ENCODE measurements at regions of chr2 and their contacts with region 1.

Region 1: DNA sequence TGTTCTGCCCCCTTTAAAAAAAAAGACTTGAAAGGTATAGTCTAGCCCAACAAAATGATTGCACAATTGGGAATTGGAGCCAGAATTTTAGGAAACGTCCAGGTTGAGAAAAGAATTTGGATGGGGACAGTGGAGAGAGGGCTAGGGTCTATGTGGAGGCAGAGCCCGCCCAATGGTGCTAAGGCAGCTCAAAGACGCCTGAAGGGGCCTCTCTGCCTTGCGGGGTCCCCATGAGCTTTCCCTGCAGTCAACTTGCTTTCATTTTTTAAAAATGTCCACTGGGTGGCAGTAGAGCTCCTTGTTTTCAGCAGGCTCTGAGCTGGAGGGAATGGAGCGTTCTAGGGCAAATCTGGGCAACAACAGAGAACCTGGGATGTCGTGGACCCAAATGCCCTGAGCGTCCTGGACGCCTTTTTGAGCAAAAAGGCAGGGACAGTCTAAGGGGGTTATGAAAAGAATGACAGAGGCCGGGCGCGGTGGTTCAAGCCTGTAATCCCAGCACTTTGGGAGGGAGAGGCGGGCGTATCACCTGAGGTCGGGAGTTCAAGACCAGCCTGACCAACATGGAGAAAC is 40.2 kb upstream of the ITM2C start:
- DNase-seq: no peak
- H3K4me3 ChIP-seq: peak overlapping the region; percentile 1; the same call in 1 of the 2 replicates
- H3K27me3 ChIP-seq: peaks cover 4% of the 10 kb centered on the region; the same call in 1 of the 2 replicates
- CTCF ChIP-seq: peak; percentile 69

Region 2: GRCh38 chr2:230700447-230700846 is 124.0 kb before region 1 on chr2:
- CTCF ChIA-PET with region 1: no interaction called
- POLR2A ChIA-PET with region 1: no interaction called
- DNase-seq: no peak
- H3K4me3 ChIP-seq: no peak overlapping the region
- H3K27me3 ChIP-seq: no peaks in the 10 kb centered on the region
- CTCF ChIP-seq: no peak

Region 3: GRCh38 chr2:230842473-230842872 is 18.0 kb after region 1 on chr2:
- CTCF ChIA-PET with region 1: interaction called, 18 read pairs
- POLR2A ChIA-PET with region 1: no interaction called
- DNase-seq: no peak
- H3K4me3 ChIP-seq: no peak overlapping the region
- H3K27me3 ChIP-seq: peaks cover 4% of the 10 kb centered on the region; the same call in 1 of the 2 replicates
- CTCF ChIP-seq: no peak

Region 4: DNA sequence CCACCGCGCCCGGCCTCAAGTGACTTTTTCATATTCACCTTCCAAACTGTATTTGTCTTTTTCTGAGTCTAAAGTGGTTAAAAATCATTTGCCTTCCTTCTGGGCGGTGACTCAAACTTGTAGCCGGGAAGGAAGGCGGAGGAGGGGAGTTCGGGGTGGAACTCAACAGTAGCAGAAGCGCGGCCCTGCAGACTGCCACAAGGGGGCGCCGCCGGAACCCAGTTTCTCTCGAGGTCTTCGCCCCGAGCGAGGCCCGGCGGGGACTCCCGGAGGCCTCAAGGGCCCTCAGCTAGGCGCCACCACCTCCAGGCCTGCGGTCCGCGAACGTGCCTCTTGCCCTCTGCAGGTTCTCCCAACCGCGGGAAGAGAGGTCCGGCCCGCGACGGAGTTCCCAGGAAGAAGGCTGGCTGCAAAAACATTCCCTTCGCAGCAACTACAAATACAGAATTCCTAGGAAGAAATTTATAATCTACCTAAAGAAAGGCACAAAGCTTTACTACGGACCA is 23.4 kb after region 1 on chr2:
- CTCF ChIA-PET with region 1: interaction called, 18 read pairs
- POLR2A ChIA-PET with region 1: no interaction called
- DNase-seq: no peak
- H3K4me3 ChIP-seq: no peak overlapping the region
- H3K27me3 ChIP-seq: peaks cover 6% of the 10 kb centered on the region
- CTCF ChIP-seq: peak; percentile 98

Region 5: DNA sequence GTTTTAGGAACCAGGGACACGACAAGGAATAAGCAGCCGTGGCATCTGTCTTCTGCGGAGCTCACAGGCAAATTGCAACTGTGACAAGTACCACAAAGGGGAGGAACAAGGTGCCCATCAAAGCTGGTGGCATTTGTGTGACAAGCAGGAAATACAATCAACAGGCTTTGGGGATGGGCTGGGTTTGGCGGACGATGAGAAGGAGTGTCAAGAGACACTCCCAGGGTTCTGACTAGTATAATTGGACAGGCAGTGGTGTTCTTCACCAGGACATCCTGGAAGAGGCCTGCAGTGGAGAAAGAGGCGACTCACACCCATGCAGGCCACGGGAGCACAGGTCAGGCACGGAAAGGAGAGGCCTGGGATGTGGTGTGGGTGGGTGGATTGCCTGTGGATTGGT is 157.2 kb after region 1 on chr2:
- CTCF ChIA-PET with region 1: interaction called, 87 read pairs
- POLR2A ChIA-PET with region 1: no interaction called
- DNase-seq: no peak
- H3K4me3 ChIP-seq: no peak overlapping the region
- H3K27me3 ChIP-seq: peaks cover 1% of the 10 kb centered on the region
- CTCF ChIP-seq: no peak

Region 6: DNA sequence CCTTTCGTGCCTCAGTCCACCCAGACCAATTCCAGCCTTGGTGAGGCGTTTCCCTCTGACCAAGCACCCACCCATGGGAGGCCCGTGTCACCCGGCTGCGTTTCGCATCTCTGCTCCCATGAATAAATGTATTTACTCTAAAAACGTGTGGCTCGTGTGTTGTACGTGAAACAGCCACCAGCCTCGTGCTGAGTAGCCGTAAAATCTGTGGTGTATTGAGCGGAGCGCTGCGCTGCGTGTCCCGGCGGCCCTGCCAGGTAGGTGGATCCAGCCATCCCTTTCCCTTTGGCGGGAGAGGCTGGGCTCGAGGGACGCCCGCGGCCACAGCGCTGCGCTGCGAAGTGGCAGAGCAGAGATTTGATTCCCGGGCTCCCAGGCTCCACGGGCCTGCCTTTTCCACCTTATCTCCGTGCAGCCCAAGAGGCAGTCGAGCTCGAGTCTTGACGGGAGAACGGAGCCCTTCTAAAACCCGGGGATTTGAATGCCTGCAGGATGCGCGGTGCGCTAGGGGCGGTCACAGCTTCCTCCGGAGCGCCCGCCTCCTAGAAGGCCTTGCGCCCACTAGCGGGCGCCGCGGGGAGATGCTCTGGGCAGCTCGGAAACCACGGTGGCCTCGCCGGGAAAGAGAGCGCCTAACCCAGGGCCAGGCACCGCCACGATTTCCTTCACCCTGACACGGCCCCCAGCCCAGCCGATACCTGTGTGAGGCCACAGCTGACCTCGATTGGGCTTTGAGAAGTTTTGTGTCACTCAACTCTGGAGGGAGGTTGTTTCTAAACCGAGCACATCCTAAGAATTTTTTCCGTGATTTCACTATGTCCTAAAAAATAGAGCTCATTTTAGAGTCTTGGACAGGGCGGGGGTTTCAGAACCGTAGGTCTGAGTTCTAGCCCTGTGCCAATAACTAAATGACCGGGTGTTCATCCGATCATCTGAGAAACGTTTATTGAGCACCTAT is 228.3 kb after region 1 on chr2:
- CTCF ChIA-PET with region 1: interaction called, 14 read pairs
- POLR2A ChIA-PET with region 1: no interaction called
- DNase-seq: no peak
- H3K4me3 ChIP-seq: peak overlapping the region; percentile 57
- H3K27me3 ChIP-seq: peaks cover 4% of the 10 kb centered on the region
- CTCF ChIP-seq: peak; percentile 96